Activated CD4-positive, alpha-beta T cell treated with anti-CD3 and anti-CD28 coated beads for 36 hours (primary cell): ENCODE measurements at regions of chr7 and their contacts with region 1.

Region 1: DNA sequence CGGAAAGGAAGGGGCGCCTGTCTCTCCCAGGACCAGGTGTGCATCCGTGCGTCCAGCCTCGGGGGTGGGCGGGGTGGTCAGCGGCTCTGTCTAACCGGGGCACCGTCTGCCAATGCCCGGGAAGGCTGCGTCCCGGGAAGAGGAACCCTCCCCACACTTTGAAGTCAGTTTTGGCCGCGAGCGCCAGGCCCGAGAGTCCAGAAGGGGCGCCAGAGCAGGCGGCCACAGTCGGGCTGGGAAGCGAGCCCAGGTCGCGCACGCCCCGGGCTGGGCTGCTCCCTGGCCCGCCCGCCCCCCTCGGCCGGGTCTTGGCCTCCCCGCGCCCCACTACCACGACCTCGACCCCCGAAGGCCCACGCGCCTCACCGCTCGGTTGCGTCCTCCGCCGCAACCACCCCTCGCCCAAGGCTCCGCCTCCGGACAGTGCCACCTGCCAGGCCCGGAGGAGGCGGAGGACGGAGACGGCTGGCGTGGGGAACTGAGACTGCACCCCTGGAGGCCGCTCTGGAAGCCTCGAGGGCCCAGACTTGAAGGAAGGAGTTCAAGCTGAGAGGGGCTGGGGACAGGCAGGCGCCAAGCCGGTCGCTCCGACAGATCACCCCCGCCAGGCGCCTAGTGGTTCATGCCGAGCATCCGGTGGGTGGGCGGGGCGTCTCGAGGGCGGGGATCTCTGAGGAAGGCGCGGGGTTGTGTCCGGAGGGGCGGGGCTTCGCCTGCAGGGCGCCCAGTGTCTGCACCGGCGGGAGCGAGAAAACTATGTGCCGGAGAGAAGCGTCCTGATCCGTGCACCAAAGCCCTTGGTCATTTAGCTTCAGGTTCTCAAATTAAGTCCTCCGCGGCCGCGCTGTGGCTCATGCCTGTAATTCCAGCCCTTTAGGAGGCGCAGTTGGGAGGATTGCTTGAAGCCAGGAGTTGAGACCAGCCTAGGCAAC is at the start of gene BRAT1:
- DNase-seq: peak; percentile 99
- ATAC-seq: peak; percentile 89
- H3K4me3 Mint-ChIP-seq: peak within 1 kb of the TSS; percentile 89
- H3K27ac Mint-ChIP-seq: peak within 1 kb of the TSS; percentile 85
- H3K4me1 Mint-ChIP-seq: peaks cover 33% of the 10 kb centered on the region
- H3K27me3 Mint-ChIP-seq: no peaks in the 10 kb centered on the region
- total RNA-seq, gene BRAT1: 34.7 to 35.9 TPM

Region 2: DNA sequence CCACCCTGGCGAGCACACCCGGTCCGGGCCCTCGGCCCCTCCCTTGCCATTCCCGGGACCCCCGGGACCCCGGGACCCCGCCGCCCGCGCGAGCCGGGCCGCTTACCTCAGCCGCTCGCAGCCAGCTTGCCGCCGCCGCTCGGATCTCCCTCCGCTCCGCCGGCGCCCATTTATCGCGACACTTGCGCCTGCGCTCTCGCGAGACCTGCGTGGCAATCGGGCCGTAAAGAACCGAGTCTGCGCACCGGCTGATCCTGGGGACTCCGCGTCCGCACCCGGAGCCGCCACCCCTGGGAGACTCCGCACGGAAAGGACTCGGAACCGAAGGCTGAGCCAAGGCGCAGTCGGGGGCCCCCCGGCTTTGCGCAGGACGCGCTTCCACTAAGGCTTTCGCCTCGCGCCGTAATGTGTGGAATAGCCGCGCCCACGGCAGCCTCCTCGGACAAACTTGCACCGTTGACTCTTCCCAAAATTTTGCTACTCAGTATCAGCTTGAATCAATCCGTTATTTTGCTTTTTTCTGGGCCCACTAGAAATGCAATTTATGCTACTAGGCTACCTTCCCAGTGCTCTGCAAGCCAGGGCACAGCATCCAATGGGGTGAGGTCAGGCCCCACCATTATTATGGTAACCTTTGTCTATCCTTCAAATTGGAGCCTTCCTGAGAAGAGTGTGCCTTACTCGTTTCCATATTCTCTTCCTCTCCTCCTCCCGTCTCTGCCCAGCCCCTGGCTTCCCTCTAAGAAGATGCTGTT is 322.4 kb before region 1 on chr7 and contains the start of gene MAD1L1:
- CTCF ChIA-PET with region 1: interaction called, 3 read pairs
- POLR2A ChIA-PET with region 1: no interaction called
- intact Hi-C with region 1: loop called in 1 of 2 experiments (anchors 2 kb)
- DNase-seq: peak; percentile 95
- ATAC-seq: peak; percentile 94
- H3K4me3 Mint-ChIP-seq: peak within 1 kb of the TSS; percentile 83
- H3K27ac Mint-ChIP-seq: peak within 1 kb of the TSS; percentile 86
- H3K4me1 Mint-ChIP-seq: peaks cover 26% of the 10 kb centered on the region
- H3K27me3 Mint-ChIP-seq: no peaks in the 10 kb centered on the region
- total RNA-seq, gene MAD1L1: 50.2 to 61.7 TPM

Region 3: GRCh38 chr7:2403014-2403717 is 152.2 kb before region 1 on chr7 and contains the start of gene CHST12:
- CTCF ChIA-PET with region 1: no interaction called
- POLR2A ChIA-PET with region 1: no interaction called
- intact Hi-C with region 1: loop called in 1 of 2 experiments (anchors 1 kb)
- DNase-seq: peak; percentile 97
- ATAC-seq: peak; percentile 70
- H3K4me3 Mint-ChIP-seq: peak within 1 kb of the TSS; percentile 79
- H3K27ac Mint-ChIP-seq: no peak within 1 kb of the TSS
- H3K4me1 Mint-ChIP-seq: peaks cover 41% of the 10 kb centered on the region
- H3K27me3 Mint-ChIP-seq: peaks cover 6% of the 10 kb centered on the region
- total RNA-seq, gene CHST12: 1.8 to 1.9 TPM

Region 4: GRCh38 chr7:2529161-2530070 is 26.0 kb before region 1 on chr7:
- CTCF ChIA-PET with region 1: interaction called, 4 read pairs
- POLR2A ChIA-PET with region 1: interaction called, 5 read pairs
- intact Hi-C with region 1: loop called (anchors 1 to 2 kb)
- DNase-seq: peak; percentile 79
- ATAC-seq: peak; percentile 58
- H3K4me3 Mint-ChIP-seq: peak overlapping the region; percentile 61
- H3K27ac Mint-ChIP-seq: peak overlapping the region; percentile 94
- H3K4me1 Mint-ChIP-seq: peaks cover 47% of the 10 kb centered on the region
- H3K27me3 Mint-ChIP-seq: no peaks in the 10 kb centered on the region

Region 5: GRCh38 chr7:2632733-2633537 is 77.5 kb after region 1 on chr7:
- CTCF ChIA-PET with region 1: no interaction called
- POLR2A ChIA-PET with region 1: no interaction called
- intact Hi-C with region 1: loop called (anchors 1 to 5 kb)
- DNase-seq: peak; percentile 77
- ATAC-seq: peak; percentile 7
- H3K4me3 Mint-ChIP-seq: peak overlapping the region; percentile 91
- H3K27ac Mint-ChIP-seq: peak overlapping the region; percentile 84
- H3K4me1 Mint-ChIP-seq: peaks cover 14% of the 10 kb centered on the region
- H3K27me3 Mint-ChIP-seq: no peaks in the 10 kb centered on the region

Region 6: DNA sequence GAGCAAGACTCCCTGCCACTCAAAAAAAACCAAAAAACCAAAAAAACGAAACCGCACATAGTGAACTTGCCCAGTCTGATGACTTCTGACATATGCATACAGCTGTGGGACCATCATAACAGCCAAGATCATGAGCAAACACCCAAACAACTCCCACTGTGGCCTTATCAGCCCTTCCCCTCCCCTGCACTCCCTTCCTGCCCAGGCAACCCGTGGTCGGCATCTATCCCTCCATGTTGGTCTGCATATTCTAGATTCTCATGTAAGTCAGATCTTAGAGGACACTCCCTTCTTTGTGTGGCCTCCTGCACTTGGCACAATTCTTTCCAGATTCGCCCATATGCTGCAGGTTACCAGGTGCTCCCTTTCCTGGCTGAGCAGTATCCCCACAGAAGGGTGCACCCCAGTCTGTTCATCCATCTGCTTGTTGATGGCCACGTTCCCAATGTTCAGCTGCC is 215.9 kb after region 1 on chr7:
- CTCF ChIA-PET with region 1: no interaction called
- POLR2A ChIA-PET with region 1: no interaction called
- intact Hi-C with region 1: loop called in 1 of 2 experiments (anchors 5 kb)
- DNase-seq: no peak
- ATAC-seq: no peak
- H3K4me3 Mint-ChIP-seq: no peak overlapping the region
- H3K27ac Mint-ChIP-seq: peak overlapping the region; percentile 90
- H3K4me1 Mint-ChIP-seq: peaks cover 40% of the 10 kb centered on the region
- H3K27me3 Mint-ChIP-seq: no peaks in the 10 kb centered on the region

Region 7: DNA sequence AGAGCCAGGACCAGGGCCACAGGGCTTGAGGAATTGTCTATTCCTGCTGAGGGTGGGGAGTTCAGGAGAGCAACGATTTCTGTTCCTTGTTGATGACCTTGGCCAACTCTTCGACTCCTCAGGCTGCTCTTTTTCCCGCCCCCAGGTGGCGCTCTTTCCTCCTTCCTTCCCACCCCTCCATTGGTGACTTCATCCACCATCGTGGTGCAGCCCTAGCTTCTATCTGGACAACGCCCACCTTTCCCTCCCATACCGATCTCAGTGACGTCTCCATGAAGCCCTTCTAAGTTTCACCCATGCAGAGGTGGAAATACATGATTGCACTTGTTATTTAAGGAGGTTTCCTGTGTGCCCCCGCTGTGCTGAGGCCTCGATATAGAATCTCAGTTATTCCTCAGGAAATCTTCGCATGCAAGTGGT is 510.3 kb after region 1 on chr7:
- CTCF ChIA-PET with region 1: no interaction called
- POLR2A ChIA-PET with region 1: no interaction called
- intact Hi-C with region 1: loop called in 1 of 2 experiments (anchors 10 kb)
- DNase-seq: peak; percentile 85
- ATAC-seq: peak; percentile 24
- H3K4me3 Mint-ChIP-seq: peak overlapping the region; percentile 44
- H3K27ac Mint-ChIP-seq: peak overlapping the region; percentile 91
- H3K4me1 Mint-ChIP-seq: peaks cover 94% of the 10 kb centered on the region
- H3K27me3 Mint-ChIP-seq: no peaks in the 10 kb centered on the region